ENCODE measurements at regions of chr7 and their contacts with region 1.

Region 1: GRCh38 chr7:131654668-131655326 is 98.4 kb upstream of the PODXL start:
- DNase-seq: peak; percentile 66
- H3K4me3 Mint-ChIP-seq: no peak overlapping the region
- H3K27ac Mint-ChIP-seq: no peak overlapping the region
- H3K4me1 Mint-ChIP-seq: no peaks in the 10 kb centered on the region
- H3K27me3 Mint-ChIP-seq: peaks cover 2% of the 10 kb centered on the region

Region 2: DNA sequence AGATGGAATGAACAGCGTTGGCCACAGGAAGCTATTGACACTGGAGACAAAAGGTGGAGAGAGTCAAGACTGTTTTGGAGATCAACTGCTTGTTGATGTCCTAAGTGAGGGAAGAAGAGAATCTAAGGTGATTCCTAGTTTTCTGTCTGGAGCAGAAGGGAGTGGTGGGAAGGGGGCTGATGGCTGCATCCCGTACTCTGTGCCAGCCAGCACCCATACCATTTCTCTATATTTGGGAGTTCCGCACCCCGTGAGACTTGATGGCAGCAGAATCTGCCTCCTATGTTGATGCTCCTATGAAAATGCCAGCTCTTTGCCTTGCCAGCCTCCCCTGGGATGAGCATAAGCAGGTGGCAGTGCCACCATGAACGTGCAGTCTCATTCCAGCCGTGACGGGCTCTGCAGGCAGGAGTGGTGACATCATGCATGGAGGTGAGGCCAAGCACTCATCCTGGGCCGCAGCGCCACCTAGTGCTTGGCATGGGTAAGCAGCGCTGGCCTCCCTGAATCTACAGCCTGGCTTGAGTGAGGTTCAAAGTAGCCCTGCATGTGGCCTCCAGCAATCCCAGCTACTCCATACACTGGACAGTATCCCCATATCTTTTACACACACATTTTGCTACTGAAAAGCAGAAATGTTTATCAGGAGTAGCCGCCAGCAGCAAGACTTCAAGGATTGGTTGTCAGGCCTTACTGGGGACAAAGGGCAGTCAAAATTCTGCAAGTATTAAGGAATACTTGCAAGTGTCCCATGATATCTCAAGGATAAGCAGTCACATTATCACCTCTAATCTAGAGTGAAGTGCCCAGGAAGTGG is 141.3 kb before region 1 on chr7:
- intact Hi-C with region 1: loop called (anchors 2 kb)
- DNase-seq: peak; percentile 69
- H3K4me3 Mint-ChIP-seq: no peak overlapping the region
- H3K27ac Mint-ChIP-seq: peak overlapping the region; percentile 2
- H3K4me1 Mint-ChIP-seq: peaks cover 14% of the 10 kb centered on the region
- H3K27me3 Mint-ChIP-seq: peaks cover 7% of the 10 kb centered on the region

Region 3: DNA sequence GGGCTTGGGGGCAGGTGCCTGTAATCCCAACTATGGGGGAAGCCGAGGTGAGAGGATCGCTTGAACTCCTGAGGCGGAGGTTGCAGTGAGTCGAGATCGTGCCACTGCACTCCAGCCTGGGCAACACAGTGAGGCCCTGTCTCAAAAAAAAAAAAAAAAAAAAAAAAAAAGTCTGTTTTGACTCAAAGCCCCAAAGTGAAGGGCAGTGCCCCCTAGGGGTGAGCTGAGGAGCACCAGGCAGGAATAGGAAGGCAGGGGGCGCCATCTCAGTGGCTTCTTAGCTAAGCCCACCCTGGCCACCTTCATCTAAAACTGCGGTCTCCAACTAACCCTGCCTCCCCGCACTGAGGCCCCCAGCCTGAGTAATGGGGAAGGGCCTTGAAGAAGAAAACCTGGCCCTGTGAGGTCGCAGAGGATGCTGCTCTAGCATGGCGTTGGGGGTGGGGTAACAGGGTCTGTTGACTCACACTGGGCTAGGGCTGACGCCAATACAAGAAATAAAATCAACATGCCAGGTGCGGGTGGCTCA is 108.2 kb before region 1 on chr7:
- intact Hi-C with region 1: loop called (anchors 10 kb)
- DNase-seq: peak; percentile 43
- H3K4me3 Mint-ChIP-seq: no peak overlapping the region
- H3K27ac Mint-ChIP-seq: no peak overlapping the region
- H3K4me1 Mint-ChIP-seq: peaks cover 2% of the 10 kb centered on the region
- H3K27me3 Mint-ChIP-seq: peaks cover 3% of the 10 kb centered on the region

Region 4: DNA sequence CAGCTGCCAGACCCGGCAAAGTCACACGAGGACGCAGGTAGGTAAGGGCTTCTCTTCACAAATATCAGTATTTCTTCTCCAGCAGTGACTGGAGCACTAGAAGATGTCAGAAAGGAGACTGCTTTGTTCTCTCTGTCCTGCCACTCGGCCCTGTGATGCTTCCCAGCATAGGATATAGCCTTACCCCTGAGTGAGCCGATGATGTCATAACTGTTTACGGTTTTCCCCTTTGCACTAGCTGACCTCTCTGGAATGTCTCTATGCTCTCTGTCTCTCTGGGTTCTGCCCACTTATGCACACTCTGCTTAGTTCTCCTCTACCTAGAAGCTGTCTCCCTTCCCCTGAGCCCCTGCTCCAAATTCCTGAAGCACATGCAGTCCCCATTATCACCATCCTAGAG is 69.1 kb after region 1 on chr7:
- intact Hi-C with region 1: no loop called
- DNase-seq: no peak
- H3K4me3 Mint-ChIP-seq: no peak overlapping the region
- H3K27ac Mint-ChIP-seq: no peak overlapping the region
- H3K4me1 Mint-ChIP-seq: no peaks in the 10 kb centered on the region
- H3K27me3 Mint-ChIP-seq: no peaks in the 10 kb centered on the region